Upper lobe of right lung (tissue), 1 donor: ENCODE measurements at regions of chr5 and their contacts with region 1.

Region 1: DNA sequence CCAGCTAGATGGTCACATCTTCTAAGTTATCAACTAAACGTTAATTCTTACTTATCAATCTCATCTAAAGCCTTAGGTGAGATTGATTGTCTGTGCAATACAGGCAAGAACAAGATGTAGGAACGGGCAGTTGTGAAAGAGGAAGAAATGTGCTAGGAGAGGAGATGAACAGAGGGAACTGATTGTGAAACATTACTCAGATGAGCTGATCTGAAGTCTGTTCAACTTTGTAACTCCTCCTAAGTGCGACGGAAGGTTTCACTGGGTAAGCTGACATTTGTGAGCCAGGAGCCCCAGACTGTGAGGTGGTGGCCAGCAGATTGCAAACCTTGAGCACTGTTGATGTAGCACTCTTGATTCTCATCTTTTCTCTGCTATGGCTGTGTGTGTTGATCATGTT is 204.1 kb downstream of the CD180 start:
- DNase-seq: no peak
- ATAC-seq: peak; percentile 55
- H3K4me3 ChIP-seq: no peak overlapping the region
- H3K27ac ChIP-seq: no peak overlapping the region
- H3K4me1 ChIP-seq: no peaks in the 10 kb centered on the region
- H3K27me3 ChIP-seq: no peaks in the 10 kb centered on the region
- CTCF ChIP-seq: no peak

Region 2: GRCh38 chr5:67149951-67150523 is 157.5 kb after region 1 on chr5:
- intact Hi-C with region 1: loop called (anchors 10 kb)
- DNase-seq: no peak
- ATAC-seq: no peak
- H3K4me3 ChIP-seq: no peak overlapping the region
- H3K27ac ChIP-seq: no peak overlapping the region
- H3K4me1 ChIP-seq: no peaks in the 10 kb centered on the region
- H3K27me3 ChIP-seq: no peaks in the 10 kb centered on the region
- CTCF ChIP-seq: peak; percentile 41